Activated CD8-positive, alpha-beta T cell treated with anti-CD3 and anti-CD28 coated beads for 36 hours (primary cell): ENCODE measurements at regions of chr6 and their contacts with region 1.

Region 1: DNA sequence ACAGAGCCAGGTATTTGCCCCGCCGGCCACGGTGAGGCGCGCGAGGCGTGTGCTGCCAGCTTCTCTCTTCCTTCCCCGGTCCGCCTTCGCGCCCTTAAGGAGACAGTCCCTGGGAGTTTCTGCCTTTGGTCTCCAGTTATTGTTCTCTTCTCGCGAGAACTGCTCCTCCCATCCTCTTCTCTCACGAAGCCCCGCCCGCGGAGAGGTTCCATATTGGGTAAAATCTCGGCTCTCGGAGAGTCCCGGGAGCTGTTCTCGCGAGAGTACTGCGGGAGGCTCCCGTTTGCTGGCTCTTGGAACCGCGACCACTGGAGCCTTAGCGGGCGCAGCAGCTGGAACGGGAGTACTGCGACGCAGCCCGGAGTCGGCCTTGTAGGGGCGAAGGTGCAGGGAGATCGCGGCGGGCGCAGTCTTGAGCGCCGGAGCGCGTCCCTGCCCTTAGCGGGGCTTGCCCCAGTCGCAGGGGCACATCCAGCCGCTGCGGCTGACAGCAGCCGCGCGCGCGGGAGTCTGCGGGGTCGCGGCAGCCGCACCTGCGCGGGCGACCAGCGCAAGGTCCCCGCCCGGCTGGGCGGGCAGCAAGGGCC is at the start of gene MAPK14:
- DNase-seq: peak; percentile 100
- ATAC-seq: peak; percentile 92
- H3K4me3 Mint-ChIP-seq: peak within 1 kb of the TSS; percentile 87
- H3K27ac Mint-ChIP-seq: peak within 1 kb of the TSS; percentile 97
- H3K4me1 Mint-ChIP-seq: peaks cover 29% of the 10 kb centered on the region
- H3K27me3 Mint-ChIP-seq: peaks cover 22% of the 10 kb centered on the region
- CTCF ChIP-seq: peak; percentile 89
- total RNA-seq, gene MAPK14: 45.7 to 49.8 TPM

Region 2: GRCh38 chr6:36052097-36052496 is 24.5 kb after region 1 on chr6:
- CTCF ChIA-PET with region 1: interaction called, 6 read pairs
- POLR2A ChIA-PET with region 1: interaction called, 10 read pairs
- intact Hi-C with region 1: no loop called
- DNase-seq: no peak
- ATAC-seq: no peak
- H3K4me3 Mint-ChIP-seq: no peak overlapping the region
- H3K27ac Mint-ChIP-seq: no peak overlapping the region
- H3K4me1 Mint-ChIP-seq: peaks cover 15% of the 10 kb centered on the region
- H3K27me3 Mint-ChIP-seq: no peaks in the 10 kb centered on the region
- CTCF ChIP-seq: no peak

Region 3: GRCh38 chr6:36063318-36064060 is 35.9 kb after region 1 on chr6:
- CTCF ChIA-PET with region 1: no interaction called
- POLR2A ChIA-PET with region 1: no interaction called
- intact Hi-C with region 1: no loop called
- DNase-seq: no peak
- ATAC-seq: no peak
- H3K4me3 Mint-ChIP-seq: no peak overlapping the region
- H3K27ac Mint-ChIP-seq: no peak overlapping the region
- H3K4me1 Mint-ChIP-seq: peaks cover 43% of the 10 kb centered on the region
- H3K27me3 Mint-ChIP-seq: no peaks in the 10 kb centered on the region
- CTCF ChIP-seq: no peak

Region 4: GRCh38 chr6:36094753-36095496 is 67.3 kb after region 1 on chr6:
- CTCF ChIA-PET with region 1: interaction called, 230 read pairs
- POLR2A ChIA-PET with region 1: interaction called, 57 read pairs
- intact Hi-C with region 1: loop called (anchors 2 kb)
- DNase-seq: peak; percentile 90
- ATAC-seq: peak; percentile 82
- H3K4me3 Mint-ChIP-seq: no peak overlapping the region
- H3K27ac Mint-ChIP-seq: peak overlapping the region; percentile 67
- H3K4me1 Mint-ChIP-seq: peaks cover 32% of the 10 kb centered on the region
- H3K27me3 Mint-ChIP-seq: no peaks in the 10 kb centered on the region
- CTCF ChIP-seq: peak; percentile 96

Region 5: DNA sequence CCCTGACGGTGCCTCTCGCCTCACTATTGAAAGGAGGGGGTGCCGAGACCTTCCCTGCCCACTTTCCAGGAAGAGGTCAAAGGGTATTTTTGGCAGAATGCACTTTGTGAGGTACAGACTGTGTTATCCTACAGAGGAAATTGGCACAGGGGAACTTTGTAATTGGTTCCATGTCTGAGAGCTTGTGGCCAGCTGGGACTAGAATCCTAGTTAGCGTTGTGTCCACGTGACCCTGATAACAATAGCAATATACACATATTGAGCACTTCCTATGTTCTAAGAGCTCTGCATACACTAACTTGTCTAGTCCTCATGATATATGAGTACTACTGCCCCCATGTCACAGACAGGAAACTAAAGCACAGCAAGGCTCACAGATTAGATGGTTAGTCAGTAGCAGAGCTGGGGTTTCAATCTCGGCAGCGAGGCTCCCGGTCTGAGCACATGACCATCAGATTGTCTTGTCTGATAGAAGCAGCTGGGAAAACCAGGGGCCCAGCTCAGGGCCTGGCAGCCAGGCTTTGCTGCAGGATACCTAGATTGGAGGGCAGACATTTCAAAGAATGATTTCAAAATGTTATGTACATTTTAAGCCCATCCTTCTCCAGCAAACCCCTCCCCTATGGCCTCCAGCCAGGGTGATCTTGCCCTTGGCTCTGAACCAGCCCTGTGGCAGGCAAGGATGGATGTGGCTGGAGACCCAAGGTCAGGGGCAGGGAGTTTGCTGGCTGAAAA is 104.1 kb after region 1 on chr6:
- CTCF ChIA-PET with region 1: interaction called, 24 read pairs
- POLR2A ChIA-PET with region 1: interaction called, 35 read pairs
- intact Hi-C with region 1: no loop called
- DNase-seq: peak; percentile 78
- ATAC-seq: peak; percentile 79
- H3K4me3 Mint-ChIP-seq: peak overlapping the region; percentile 88
- H3K27ac Mint-ChIP-seq: peak overlapping the region; percentile 96
- H3K4me1 Mint-ChIP-seq: peaks cover 50% of the 10 kb centered on the region
- H3K27me3 Mint-ChIP-seq: no peaks in the 10 kb centered on the region
- CTCF ChIP-seq: no peak

Region 6: GRCh38 chr6:36302227-36302976 is 274.8 kb after region 1 on chr6:
- CTCF ChIA-PET with region 1: interaction called, 4 read pairs
- POLR2A ChIA-PET with region 1: interaction called, 3 read pairs
- intact Hi-C with region 1: loop called (anchors 10 kb)
- DNase-seq: peak; percentile 98
- ATAC-seq: peak; percentile 98
- H3K4me3 Mint-ChIP-seq: no peak overlapping the region
- H3K27ac Mint-ChIP-seq: no peak overlapping the region
- H3K4me1 Mint-ChIP-seq: no peaks in the 10 kb centered on the region
- H3K27me3 Mint-ChIP-seq: peaks cover 8% of the 10 kb centered on the region
- CTCF ChIP-seq: peak; percentile 99